Panc1 (cell line): ENCODE measurements at regions of chr3 and their contacts with region 1.

Region 1: GRCh38 chr3:179630753-179631451 is 21.9 kb upstream of the USP13 start:
- DNase-seq: no peak
- ATAC-seq: no peak
- H3K4me3 ChIP-seq: no peak overlapping the region
- H3K27ac ChIP-seq: no peak overlapping the region
- H3K4me1 ChIP-seq: no peaks in the 10 kb centered on the region
- H3K27me3 ChIP-seq: no peaks in the 10 kb centered on the region
- CTCF ChIP-seq: no peak

Region 2: GRCh38 chr3:179512378-179512777 is 118.5 kb before region 1 on chr3:
- CTCF ChIA-PET with region 1: no interaction called
- POLR2A ChIA-PET with region 1: no interaction called
- in situ Hi-C with region 1: no loop called
- intact Hi-C with region 1: no loop called
- DNase-seq: no peak
- ATAC-seq: no peak
- H3K4me3 ChIP-seq: no peak overlapping the region
- H3K27ac ChIP-seq: no peak overlapping the region
- H3K4me1 ChIP-seq: no peaks in the 10 kb centered on the region
- H3K27me3 ChIP-seq: peaks cover 2% of the 10 kb centered on the region; the same call in 1 of the 2 replicates
- CTCF ChIP-seq: no peak

Region 3: DNA sequence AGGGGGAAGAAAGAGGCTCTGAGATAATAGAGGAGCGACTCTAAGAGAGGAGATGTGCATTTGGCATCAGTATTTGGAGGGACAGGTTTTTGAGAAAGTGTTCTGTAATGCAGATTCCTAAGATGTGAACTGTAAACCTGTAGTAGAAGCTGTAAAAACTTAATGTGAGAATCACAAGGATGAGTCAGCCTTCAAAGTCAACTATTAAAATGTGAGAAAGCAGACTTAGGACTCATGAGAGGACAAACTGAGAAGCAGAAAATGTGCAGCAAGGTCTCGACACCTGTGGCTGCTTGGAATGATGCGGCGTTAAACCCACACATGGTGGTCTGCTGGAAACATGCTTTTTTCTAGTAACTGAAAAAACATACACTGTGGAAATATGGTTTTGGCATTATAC is 57.9 kb after region 1 on chr3:
- CTCF ChIA-PET with region 1: interaction called, 10 read pairs
- POLR2A ChIA-PET with region 1: no interaction called
- in situ Hi-C with region 1: no loop called
- intact Hi-C with region 1: no loop called
- DNase-seq: no peak
- ATAC-seq: peak; percentile 79
- H3K4me3 ChIP-seq: no peak overlapping the region
- H3K27ac ChIP-seq: no peak overlapping the region
- H3K4me1 ChIP-seq: peaks cover 6% of the 10 kb centered on the region
- H3K27me3 ChIP-seq: no peaks in the 10 kb centered on the region
- CTCF ChIP-seq: no peak

Region 4: GRCh38 chr3:179794355-179794754 is 163.5 kb after region 1 on chr3:
- CTCF ChIA-PET with region 1: no interaction called
- POLR2A ChIA-PET with region 1: no interaction called
- in situ Hi-C with region 1: no loop called
- intact Hi-C with region 1: no loop called
- DNase-seq: no peak
- ATAC-seq: no peak
- H3K4me3 ChIP-seq: no peak overlapping the region
- H3K27ac ChIP-seq: no peak overlapping the region
- H3K4me1 ChIP-seq: no peaks in the 10 kb centered on the region
- H3K27me3 ChIP-seq: no peaks in the 10 kb centered on the region
- CTCF ChIP-seq: no peak

Region 5: GRCh38 chr3:179933080-179933479 is 302.2 kb after region 1 on chr3:
- CTCF ChIA-PET with region 1: no interaction called
- POLR2A ChIA-PET with region 1: no interaction called
- in situ Hi-C with region 1: no loop called
- intact Hi-C with region 1: no loop called
- DNase-seq: no peak
- ATAC-seq: no peak
- H3K4me3 ChIP-seq: no peak overlapping the region
- H3K27ac ChIP-seq: no peak overlapping the region
- H3K4me1 ChIP-seq: no peaks in the 10 kb centered on the region
- H3K27me3 ChIP-seq: no peaks in the 10 kb centered on the region
- CTCF ChIP-seq: no peak